Heart right ventricle (tissue), 16 donors: ENCODE measurements at regions of chr1 and their contacts with region 1.

Region 1: DNA sequence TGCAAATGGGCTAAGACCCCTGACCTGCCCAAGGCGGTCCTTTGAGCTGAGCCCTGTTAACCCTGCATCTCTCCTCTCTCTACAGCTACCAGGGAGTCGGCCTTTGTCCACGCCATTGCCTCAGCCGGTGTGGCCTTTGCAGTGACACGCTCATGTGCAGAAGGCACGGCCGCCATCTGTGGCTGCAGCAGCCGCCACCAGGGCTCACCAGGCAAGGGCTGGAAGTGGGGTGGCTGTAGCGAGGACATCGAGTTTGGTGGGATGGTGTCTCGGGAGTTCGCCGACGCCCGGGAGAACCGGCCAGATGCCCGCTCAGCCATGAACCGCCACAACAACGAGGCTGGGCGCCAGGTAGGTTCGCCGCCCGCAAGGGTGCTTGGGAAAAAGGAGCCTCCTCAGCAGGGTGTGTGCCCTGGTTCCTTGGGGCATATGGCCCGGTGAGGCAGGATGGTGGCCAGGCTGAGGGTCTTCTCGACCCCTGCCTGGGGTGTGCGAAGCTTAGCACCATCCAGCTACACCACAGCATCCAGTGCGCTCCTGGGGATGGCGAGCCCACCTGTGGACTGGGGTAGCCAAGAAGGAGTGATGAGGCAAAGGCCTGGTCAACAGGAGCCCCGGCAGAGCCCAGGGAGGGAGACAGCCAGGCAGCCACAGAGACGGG is 31.8 kb upstream of the ARF1 start:
- DNase-seq: no peak
- ATAC-seq: no peak
- H3K4me3 ChIP-seq: no peak overlapping the region
- H3K27ac ChIP-seq: no peak overlapping the region
- H3K4me1 ChIP-seq: no peaks in the 10 kb centered on the region
- H3K27me3 ChIP-seq: peaks cover 0 to 49% (median 36%) of the 10 kb centered on the region in 7 donors
- CTCF ChIP-seq: no peak

Region 2: DNA sequence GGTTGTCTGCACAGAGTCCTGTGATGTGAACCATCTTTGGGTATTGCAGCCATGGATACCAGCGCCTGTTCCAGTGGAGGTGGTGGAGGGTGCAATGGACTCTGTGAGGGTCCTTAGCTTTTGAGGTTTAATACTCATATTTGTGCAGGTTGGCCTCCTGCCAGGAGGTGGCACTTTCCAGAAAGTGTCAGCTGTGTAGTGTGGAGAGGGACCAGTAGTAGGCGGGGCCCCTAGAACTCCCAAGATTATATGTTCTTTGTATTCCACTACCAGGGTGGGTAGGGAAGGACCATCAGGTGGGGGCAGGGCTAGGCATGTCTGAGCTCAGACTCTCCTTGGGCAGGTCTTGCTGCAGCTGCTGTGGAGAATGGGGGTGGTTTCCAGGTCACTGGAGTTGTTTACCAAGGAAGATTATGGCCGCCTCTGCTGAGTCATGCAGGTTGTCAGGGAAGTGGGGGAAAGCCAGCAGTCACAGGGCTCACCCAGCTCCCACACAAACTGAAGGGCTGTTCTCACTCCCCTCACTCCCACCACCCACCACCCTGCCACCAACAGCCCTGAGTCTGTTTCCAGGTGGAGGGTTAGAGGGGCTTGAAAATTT is 518.6 kb before region 1 on chr1:
- intact Hi-C with region 1: no loop called
- DNase-seq: no peak
- ATAC-seq: no peak
- H3K4me3 ChIP-seq: no peak overlapping the region
- H3K27ac ChIP-seq: no peak overlapping the region
- H3K4me1 ChIP-seq: no peaks in the 10 kb centered on the region
- H3K27me3 ChIP-seq: no peaks in the 10 kb centered on the region
- CTCF ChIP-seq: no peak

Region 3: DNA sequence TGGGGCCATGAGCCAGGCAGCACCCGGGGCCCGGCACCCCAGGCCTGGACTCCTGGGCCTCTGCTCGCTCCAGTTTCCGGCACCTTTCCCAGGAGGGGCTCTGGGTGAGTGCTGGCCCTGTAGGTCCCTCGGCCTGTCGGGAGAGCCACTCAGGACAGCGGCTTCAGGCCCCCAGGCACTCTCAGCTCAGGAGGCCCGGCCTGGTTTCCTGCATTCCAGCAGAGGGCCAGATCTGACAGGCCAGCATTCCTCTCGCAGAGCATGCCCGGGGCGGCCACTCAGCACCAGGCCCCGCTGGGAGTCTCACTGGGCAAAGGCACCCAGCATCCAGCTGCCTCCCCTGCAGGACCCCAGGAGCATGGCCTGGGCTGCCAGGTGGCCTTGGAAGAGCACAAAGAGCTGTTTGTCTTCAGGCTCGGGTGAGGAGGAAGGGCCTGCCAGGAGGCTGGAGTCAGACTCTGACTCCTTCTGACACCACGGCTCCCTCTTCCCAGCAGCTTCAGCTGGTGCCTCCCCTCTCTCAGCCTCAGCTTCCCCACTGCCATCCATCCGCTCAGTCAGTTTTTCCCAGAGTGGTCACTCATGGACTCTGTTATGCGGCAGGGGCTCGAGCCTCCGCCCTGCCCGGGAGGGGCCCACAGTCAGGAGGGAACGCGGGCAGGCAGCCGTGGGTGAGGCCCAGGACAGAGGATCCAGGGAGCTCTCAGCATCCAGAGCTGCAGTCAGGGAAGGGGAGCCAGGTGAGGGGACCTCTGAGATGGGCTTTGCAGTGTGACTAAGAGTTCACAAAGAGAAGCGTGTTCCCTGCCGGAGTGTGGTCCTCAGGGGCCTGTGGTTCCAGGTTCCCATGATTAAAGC is 154.6 kb before region 1 on chr1:
- intact Hi-C with region 1: no loop called
- DNase-seq: peak in 1 of 2 donors; percentile 11
- ATAC-seq: peak in 6 of 8 donors; percentile 8 to 62 (median 33)
- H3K4me3 ChIP-seq: no peak overlapping the region
- H3K27ac ChIP-seq: peak overlapping the region in 3 of 10 donors; percentile 12 to 62 (median 58)
- H3K4me1 ChIP-seq: peaks cover 0 to 15% (median 0%) of the 10 kb centered on the region in 9 donors
- H3K27me3 ChIP-seq: no peaks in the 10 kb centered on the region
- CTCF ChIP-seq: no peak

Region 4: DNA sequence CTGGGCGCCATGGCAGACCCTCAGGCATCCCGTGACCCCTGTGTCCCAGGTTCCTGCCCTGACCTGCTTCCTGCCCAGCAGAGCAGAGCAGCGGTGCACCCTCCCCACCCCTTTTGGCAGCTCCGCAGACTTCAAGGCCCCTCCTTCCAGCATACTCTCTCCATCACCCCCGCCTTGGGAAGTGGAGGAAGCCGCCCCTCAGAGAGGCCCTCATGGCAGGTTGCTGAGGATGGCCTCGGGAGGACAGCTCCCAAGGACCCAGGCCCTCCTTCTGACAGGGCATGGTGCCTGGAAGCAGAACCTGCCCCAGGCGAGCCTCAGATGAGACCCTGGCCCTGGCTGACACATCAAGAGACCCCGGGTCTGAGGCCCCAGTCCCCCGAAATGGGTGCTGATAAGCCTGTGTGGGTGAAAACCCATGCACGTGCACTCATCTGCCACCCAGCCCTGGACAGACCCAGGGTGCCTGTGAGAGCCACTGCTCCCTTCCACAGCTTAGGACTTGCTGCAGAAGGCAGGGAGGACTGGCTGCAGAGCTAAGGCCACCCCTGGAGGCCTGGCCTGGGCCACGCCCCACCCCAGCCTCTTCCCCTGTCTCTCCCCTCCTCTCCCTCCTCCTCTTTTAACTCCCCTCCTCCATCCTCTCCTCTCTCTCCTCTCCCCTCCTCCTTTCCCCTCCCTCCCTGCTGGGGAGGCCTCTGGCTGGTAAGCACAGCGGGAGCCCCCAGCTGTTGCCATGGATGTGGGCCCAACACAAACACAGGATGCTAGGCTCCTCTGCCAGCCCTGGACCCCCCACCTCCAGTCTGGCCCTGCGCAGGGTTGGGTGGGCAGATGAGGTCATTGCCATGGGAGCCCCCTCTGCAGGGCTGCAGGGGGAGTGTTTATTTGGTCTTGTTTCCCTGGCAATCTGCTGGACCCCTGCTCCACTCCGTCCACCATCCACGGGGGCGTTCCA is 136.7 kb before region 1 on chr1:
- intact Hi-C with region 1: loop called in 1 of 10 experiments (anchors 5 kb)
- DNase-seq: no peak
- ATAC-seq: peak in 3 of 8 donors; percentile 19 to 36 (median 28)
- H3K4me3 ChIP-seq: no peak overlapping the region
- H3K27ac ChIP-seq: no peak overlapping the region
- H3K4me1 ChIP-seq: peaks cover 0 to 3% (median 0%) of the 10 kb centered on the region in 9 donors
- H3K27me3 ChIP-seq: no peaks in the 10 kb centered on the region
- CTCF ChIP-seq: no peak